ENCODE measurements at regions of chr13 and their contacts with region 1.

Region 1: GRCh38 chr13:114314074-114314912 is at the start of gene CHAMP1:
- DNase-seq: peak; percentile 97
- H3K4me3 Mint-ChIP-seq: peak within 1 kb of the TSS; percentile 94
- H3K27ac Mint-ChIP-seq: peak within 1 kb of the TSS; percentile 96
- H3K4me1 Mint-ChIP-seq: peaks cover 48% of the 10 kb centered on the region
- H3K27me3 Mint-ChIP-seq: no peaks in the 10 kb centered on the region
- total RNA-seq, gene CHAMP1: 53.6 to 55.4 TPM

Region 2: DNA sequence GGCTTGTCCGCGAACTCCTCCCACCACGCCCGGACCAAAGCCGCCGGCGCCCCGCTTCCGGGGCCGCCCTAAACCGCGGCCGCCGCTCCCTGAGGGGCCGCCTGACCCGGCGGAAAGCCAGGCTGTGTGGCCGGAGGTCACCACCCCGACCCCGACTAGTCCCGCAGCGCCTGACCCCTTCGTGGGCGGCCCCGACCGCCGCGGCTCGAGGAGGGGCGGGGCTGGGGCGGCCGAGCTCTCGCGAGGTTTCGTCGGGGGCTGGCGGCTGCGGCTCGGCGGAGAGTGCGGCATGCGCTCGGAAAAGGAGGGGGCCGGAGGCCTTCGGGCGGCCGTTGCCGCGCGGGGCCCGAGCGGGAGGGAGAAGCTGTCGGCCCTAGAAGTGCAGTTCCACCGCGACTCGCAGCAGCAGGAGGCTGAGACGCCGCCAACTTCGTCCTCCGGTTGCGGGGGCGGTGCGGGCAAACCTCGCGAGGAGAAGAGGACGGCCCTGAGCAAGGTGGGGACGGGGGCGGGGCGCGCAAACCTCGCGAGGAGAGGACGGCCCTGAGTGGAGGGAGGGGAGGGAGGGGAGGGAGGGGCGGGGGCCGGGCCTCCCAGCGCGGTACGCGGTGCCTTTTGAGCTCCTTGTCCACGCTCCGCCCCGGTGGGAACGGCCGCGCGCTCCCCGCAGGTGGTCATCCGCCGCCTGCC is 32.8 kb before region 1 on chr13 and contains the start of gene UPF3A:
- CTCF ChIA-PET with region 1: interaction called, 3 read pairs
- POLR2A ChIA-PET with region 1: interaction called, 13 read pairs
- intact Hi-C with region 1: loop called (anchors 1 kb)
- DNase-seq: peak; percentile 92
- H3K4me3 Mint-ChIP-seq: peak within 1 kb of the TSS; percentile 90
- H3K27ac Mint-ChIP-seq: peak within 1 kb of the TSS; percentile 100
- H3K4me1 Mint-ChIP-seq: peaks cover 44% of the 10 kb centered on the region
- H3K27me3 Mint-ChIP-seq: no peaks in the 10 kb centered on the region
- total RNA-seq, gene UPF3A: 46.8 to 48.5 TPM

Region 3: GRCh38 chr13:114288157-114288591 is 26.1 kb before region 1 on chr13:
- CTCF ChIA-PET with region 1: no interaction called
- POLR2A ChIA-PET with region 1: no interaction called
- intact Hi-C with region 1: loop called (anchors 1 kb)
- DNase-seq: no peak
- H3K4me3 Mint-ChIP-seq: no peak overlapping the region
- H3K27ac Mint-ChIP-seq: no peak overlapping the region
- H3K4me1 Mint-ChIP-seq: peaks cover 28% of the 10 kb centered on the region
- H3K27me3 Mint-ChIP-seq: no peaks in the 10 kb centered on the region

Region 4: GRCh38 chr13:114324334-114324733 is 10.0 kb after region 1 on chr13:
- CTCF ChIA-PET with region 1: interaction called, 5 read pairs
- POLR2A ChIA-PET with region 1: interaction called, 7 read pairs
- intact Hi-C with region 1: loop called (anchors 1 kb)
- DNase-seq: peak; percentile 54
- H3K4me3 Mint-ChIP-seq: peak overlapping the region; percentile 7
- H3K27ac Mint-ChIP-seq: peak overlapping the region; percentile 81
- H3K4me1 Mint-ChIP-seq: peaks cover 61% of the 10 kb centered on the region
- H3K27me3 Mint-ChIP-seq: no peaks in the 10 kb centered on the region

Region 5: DNA sequence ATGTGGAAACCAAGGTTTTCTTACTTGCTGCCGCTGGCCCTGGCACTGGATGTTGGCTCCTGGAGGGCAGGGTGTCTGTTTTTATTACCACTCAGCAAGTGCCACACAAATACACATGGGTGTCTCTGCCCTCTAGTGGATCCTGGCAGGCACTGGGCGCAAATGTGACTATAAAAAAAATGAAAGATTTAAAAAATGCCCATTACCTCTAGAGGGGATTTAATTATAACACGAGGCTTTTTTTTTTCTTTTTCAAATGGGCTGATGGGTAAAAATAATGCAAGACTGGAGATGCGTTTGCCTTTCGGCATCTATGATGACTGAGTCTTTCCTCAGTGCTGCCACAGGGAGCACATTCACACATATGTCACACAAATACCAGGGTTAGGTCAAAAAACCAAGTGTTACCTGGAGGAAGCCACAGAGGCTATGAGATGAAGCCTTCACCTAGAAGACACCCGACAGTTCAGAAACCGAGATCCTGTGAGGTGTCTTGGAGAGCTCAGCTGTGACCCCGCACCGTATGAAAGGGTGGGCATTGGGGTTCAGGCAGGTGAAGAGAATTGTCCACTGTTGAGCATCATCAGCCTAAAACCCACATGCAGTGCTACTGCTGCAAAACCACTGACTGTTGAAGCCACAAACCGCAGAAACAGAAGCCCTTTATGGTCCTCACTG is 25.7 kb after region 1 on chr13:
- CTCF ChIA-PET with region 1: interaction called, 7 read pairs
- POLR2A ChIA-PET with region 1: no interaction called
- intact Hi-C with region 1: loop called (anchors 1 kb)
- DNase-seq: peak; percentile 63
- H3K4me3 Mint-ChIP-seq: peak overlapping the region; percentile 23
- H3K27ac Mint-ChIP-seq: no peak overlapping the region
- H3K4me1 Mint-ChIP-seq: peaks cover 13% of the 10 kb centered on the region
- H3K27me3 Mint-ChIP-seq: peaks cover 2% of the 10 kb centered on the region